CD8-positive, alpha-beta T cell (primary cell): ENCODE measurements at regions of chr9 and their contacts with region 1.

Region 1: DNA sequence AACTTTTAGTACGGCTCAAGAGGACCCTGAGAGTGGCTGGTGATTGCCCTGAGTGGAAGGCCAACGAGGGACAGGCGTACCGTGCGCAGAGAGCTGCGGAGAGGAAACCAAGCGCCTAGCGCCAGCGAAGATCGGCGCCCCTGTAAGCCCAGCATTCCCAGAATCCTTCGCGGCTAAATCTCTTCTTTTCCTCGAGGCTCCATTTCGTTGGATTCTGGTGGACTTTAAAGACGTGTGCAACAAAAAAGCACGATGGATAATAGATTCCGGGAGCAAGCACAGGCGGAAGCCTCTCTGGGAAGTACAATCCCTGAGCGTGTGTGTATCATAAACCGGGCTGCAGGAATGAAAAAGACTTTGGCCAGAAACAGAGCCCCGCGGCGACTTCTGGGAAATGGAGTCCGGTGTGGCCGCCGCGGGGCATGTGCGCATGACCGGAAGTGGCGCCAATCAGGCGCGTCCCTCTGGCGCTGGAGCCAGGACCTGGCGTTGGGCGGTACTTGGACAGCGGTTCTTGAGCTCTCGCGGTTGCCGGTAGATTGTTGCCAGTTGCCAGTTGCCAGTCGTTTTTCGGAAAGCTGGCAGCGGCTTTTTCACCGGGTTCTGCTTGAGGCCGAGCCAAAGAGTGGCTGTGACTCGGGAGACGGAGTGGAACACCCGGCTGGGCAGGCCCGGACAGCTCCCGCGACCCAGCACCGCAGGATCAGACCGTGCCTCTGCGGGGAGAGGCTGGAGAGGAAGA is at the start of gene ZNF79:
- DNase-seq: peak; percentile 81 to 94 (median 91)
- ATAC-seq: peak; percentile 84
- H3K4me3 ChIP-seq: peak within 1 kb of the TSS; percentile 71 to 98
- H3K4me3 Mint-ChIP-seq: peak within 1 kb of the TSS; percentile 99
- H3K27ac ChIP-seq: peak within 1 kb of the TSS; percentile 67 to 72
- H3K27ac Mint-ChIP-seq: peak within 1 kb of the TSS; percentile 95
- H3K4me1 ChIP-seq: peaks cover 25% of the 10 kb centered on the region
- H3K4me1 Mint-ChIP-seq: peaks cover 44% of the 10 kb centered on the region
- H3K27me3 ChIP-seq: no peaks in the 10 kb centered on the region
- H3K27me3 Mint-ChIP-seq: no peaks in the 10 kb centered on the region
- CTCF ChIP-seq: no peak
- total RNA-seq, gene ZNF79: 7.5 to 7.7 TPM

Region 2: DNA sequence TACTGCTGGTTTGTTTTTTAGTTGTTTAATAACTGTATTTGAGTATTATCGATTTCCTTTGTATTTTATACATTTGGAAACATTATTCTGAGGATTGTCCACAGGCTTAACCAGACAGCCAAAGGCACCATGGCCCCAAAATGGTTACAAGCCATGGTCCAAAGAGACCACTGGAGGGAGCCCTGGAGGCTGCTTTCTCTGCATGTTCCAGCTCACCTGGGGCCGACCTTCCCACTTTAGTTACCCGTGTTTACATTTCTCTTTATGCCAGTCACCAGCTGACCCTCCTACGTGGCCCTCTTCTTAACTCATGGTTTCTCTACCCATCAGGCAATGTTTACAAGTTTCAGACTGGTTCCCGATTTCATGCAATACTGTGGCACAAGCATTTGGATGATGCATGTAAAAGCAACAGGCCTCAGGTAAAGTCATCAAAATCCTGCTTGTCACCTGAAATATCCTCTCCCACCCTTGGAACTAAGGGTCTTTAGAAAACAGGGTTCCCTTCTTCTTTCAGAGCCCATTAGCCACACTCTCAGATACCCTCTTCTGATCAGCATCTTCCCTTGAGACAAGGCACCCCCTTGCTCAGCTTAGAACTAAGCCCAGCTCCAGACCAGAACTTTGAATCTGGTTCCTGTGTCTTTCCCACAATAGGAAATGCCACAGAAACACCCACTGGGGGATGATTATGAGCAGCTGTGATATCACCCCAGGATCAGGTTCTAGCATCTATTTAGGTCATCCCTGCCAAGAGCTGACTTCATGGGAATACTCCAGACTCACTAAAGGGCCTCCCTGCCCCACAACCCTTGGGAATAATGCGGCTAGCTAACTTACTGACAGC is 209.5 kb before region 1 on chr9:
- CTCF ChIA-PET with region 1: interaction called, 4 read pairs
- POLR2A ChIA-PET with region 1: no interaction called
- intact Hi-C with region 1: loop called (anchors 2 to 5 kb)
- DNase-seq: peak; percentile 36 to 73 (median 64)
- ATAC-seq: peak; percentile 93
- H3K4me3 ChIP-seq: no peak overlapping the region
- H3K4me3 Mint-ChIP-seq: no peak overlapping the region
- H3K27ac ChIP-seq: no peak overlapping the region
- H3K27ac Mint-ChIP-seq: no peak overlapping the region
- H3K4me1 ChIP-seq: no peaks in the 10 kb centered on the region
- H3K4me1 Mint-ChIP-seq: peaks cover 3% of the 10 kb centered on the region
- H3K27me3 ChIP-seq: no peaks in the 10 kb centered on the region
- H3K27me3 Mint-ChIP-seq: peaks cover 8% of the 10 kb centered on the region
- CTCF ChIP-seq: peak; percentile 69

Region 3: DNA sequence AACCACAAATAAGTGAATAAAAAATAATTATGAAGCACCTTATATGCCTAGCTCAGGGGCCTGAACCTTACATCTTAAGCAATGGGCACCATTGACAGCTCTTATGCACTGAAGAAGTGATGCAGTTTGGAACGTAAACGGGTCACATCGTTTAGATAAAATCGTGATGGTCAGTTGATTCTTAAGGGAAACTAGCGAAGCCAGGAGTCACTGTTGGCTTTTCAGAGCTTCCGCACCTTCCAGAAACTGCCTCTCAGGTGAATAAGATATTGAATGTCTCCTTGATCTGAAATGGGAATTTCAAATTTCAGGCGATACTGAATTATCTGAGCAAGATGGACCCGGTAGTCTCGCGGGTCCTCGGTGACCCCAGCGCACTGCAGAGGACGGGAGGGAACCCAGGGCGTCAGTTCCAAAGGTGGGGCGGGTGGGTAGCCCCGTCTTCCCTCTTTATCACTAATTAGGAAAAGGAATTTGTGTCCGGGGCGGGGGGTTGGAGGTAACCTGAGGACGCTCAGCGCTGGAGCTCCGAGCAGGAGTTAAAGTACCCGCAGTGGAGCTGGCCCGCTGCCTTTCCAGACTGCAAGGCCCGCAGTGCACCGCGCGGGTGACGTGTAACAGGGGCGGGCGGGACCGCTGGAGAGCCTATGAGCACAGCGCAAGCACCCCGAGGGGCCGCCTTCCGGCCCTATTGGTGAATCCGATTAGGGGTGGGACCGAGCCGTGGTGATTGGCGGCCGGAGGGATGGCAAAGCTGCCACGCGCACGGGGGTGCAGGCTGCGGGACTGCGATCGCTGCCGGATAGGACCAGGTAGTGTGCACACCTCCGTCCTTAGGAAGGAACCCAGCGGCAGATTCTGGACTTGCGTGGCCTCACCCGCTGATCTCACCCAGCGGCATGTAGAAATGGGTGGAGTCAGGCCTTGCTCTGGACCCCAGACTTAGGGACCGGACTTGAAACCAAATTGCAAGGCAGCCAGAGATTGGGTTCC is 179.2 kb before region 1 on chr9:
- CTCF ChIA-PET with region 1: no interaction called
- POLR2A ChIA-PET with region 1: interaction called, 4 read pairs
- intact Hi-C with region 1: loop called (anchors 1 kb)
- DNase-seq: peak; percentile 88 to 96 (median 94)
- ATAC-seq: peak; percentile 100
- H3K4me3 ChIP-seq: peak overlapping the region; percentile 57 to 76
- H3K4me3 Mint-ChIP-seq: peak overlapping the region; percentile 86
- H3K27ac ChIP-seq: peak overlapping the region in 1 of 2 experiments; percentile 12
- H3K27ac Mint-ChIP-seq: no peak overlapping the region
- H3K4me1 ChIP-seq: peaks cover 6% of the 10 kb centered on the region
- H3K4me1 Mint-ChIP-seq: peaks cover 15% of the 10 kb centered on the region
- H3K27me3 ChIP-seq: no peaks in the 10 kb centered on the region
- H3K27me3 Mint-ChIP-seq: peaks cover 7% of the 10 kb centered on the region
- CTCF ChIP-seq: no peak

Region 4: DNA sequence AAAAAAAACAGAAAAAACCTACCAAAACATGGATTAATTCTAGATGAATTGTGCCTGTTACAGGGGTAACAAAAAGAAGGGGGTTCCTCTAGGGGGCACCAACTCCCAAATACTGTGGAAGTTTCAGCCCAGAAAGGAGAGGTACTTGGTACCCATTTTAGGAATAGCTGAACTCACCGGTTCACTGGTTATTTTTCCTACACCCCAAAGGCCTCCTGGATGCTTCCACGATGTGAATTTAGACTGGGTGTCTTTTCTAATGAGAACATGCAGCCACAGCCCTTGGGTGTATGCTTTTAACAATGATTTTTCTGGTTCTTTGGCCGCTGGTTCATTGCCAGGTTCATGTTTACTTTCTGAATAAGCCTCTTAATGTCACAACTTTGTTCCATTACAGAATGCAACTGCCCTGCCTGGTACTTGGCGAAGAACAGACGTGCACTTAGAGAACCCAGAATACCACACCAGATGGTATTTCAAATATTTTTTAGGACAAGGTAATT is 112.8 kb before region 1 on chr9:
- CTCF ChIA-PET with region 1: interaction called, 9 read pairs
- POLR2A ChIA-PET with region 1: no interaction called
- intact Hi-C with region 1: loop called (anchors 5 to 10 kb)
- DNase-seq: peak in 7 of 9 experiments; percentile 6 to 57 (median 40)
- ATAC-seq: no peak
- H3K4me3 ChIP-seq: no peak overlapping the region
- H3K4me3 Mint-ChIP-seq: no peak overlapping the region
- H3K27ac ChIP-seq: no peak overlapping the region
- H3K27ac Mint-ChIP-seq: no peak overlapping the region
- H3K4me1 ChIP-seq: no peaks in the 10 kb centered on the region
- H3K4me1 Mint-ChIP-seq: no peaks in the 10 kb centered on the region
- H3K27me3 ChIP-seq: no peaks in the 10 kb centered on the region
- H3K27me3 Mint-ChIP-seq: peaks cover 25% of the 10 kb centered on the region
- CTCF ChIP-seq: no peak

Region 5: GRCh38 chr9:127388037-127388855 is 35.9 kb before region 1 on chr9:
- CTCF ChIA-PET with region 1: no interaction called
- POLR2A ChIA-PET with region 1: interaction called, 3 read pairs
- intact Hi-C with region 1: loop called (anchors 1 kb)
- DNase-seq: peak; percentile 73 to 96 (median 84)
- ATAC-seq: peak; percentile 97
- H3K4me3 ChIP-seq: no peak overlapping the region
- H3K4me3 Mint-ChIP-seq: peak overlapping the region; percentile 4
- H3K27ac ChIP-seq: no peak overlapping the region
- H3K27ac Mint-ChIP-seq: peak overlapping the region; percentile 7
- H3K4me1 ChIP-seq: peaks cover 18% of the 10 kb centered on the region
- H3K4me1 Mint-ChIP-seq: peaks cover 26% of the 10 kb centered on the region
- H3K27me3 ChIP-seq: peaks cover 28 to 61% of the 10 kb centered on the region in 2 experiments
- H3K27me3 Mint-ChIP-seq: peaks cover 66% of the 10 kb centered on the region
- CTCF ChIP-seq: no peak

Region 6: DNA sequence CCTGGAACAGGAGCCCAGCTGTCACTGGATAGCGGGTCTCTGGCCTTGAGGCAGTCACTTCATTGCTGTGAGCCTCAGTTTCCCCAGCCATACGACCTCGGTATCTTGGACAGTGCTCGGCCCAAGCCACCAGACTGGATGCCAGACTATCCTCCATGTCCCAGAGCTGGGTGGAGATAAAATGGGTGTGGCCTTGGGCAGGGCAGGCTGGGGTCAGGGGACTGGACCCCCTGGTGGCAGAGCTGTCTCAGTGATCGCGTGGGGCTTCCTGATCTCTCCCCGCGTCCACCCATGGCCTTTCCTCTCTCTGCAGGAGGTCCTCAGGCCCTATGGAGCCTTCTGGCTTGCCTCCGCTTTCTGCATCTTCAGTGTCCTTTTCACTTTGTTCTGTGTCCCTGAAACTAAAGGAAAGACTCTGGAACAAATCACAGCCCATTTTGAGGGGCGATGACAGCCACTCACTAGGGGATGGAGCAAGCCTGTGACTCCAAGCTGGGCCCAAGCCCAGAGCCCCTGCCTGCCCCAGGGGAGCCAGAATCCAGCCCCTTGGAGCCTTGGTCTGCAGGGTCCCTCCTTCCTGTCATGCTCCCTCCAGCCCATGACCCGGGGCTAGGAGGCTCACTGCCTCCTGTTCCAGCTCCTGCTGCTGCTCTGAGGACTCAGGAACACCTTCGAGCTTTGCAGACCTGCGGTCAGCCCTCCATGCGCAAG is 17.2 kb before region 1 on chr9:
- CTCF ChIA-PET with region 1: no interaction called
- POLR2A ChIA-PET with region 1: no interaction called
- intact Hi-C with region 1: no loop called
- DNase-seq: no peak
- ATAC-seq: no peak
- H3K4me3 ChIP-seq: no peak overlapping the region
- H3K4me3 Mint-ChIP-seq: no peak overlapping the region
- H3K27ac ChIP-seq: no peak overlapping the region
- H3K27ac Mint-ChIP-seq: no peak overlapping the region
- H3K4me1 ChIP-seq: no peaks in the 10 kb centered on the region
- H3K4me1 Mint-ChIP-seq: no peaks in the 10 kb centered on the region
- H3K27me3 ChIP-seq: peaks cover 0 to 10% of the 10 kb centered on the region in 2 experiments
- H3K27me3 Mint-ChIP-seq: peaks cover 43% of the 10 kb centered on the region
- CTCF ChIP-seq: no peak